ENCODE measurements at regions of chr9 and their contacts with region 1.

Region 1: DNA sequence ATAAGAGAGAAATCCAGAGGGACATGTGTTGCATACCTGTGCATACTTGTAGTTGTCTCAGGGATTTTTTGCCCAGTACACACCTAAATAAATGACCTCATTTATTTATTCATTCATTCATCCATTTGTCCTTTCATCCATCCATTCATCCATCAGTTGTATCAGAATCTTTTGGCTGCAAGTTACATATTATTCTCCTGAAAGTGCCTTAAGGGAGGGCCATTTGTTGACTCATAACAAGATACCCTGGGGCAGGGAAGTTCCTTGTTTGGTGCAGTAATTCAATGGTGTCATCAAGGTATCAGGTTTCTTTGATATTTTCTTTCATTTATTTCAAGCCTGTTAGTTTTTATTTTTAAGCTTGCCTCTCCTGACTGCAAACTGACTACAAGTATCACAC is 597.9 kb upstream of the TLE4 start:
- DNase-seq: peak; percentile 87
- H3K4me3 ChIP-seq: no peak overlapping the region
- H3K27ac ChIP-seq: peak overlapping the region; percentile 32
- H3K4me1 ChIP-seq: peaks cover 10% of the 10 kb centered on the region
- H3K27me3 ChIP-seq: no peaks in the 10 kb centered on the region
- CTCF ChIP-seq: no peak

Region 2: GRCh38 chr9:78574354-78575045 is 399.4 kb before region 1 on chr9:
- CTCF ChIA-PET with region 1: no interaction called
- dilution Hi-C with region 1: no loop called
- in situ Hi-C with region 1: no loop called
- intact Hi-C with region 1: no loop called
- DNase-seq: no peak
- H3K4me3 ChIP-seq: no peak overlapping the region
- H3K27ac ChIP-seq: no peak overlapping the region
- H3K4me1 ChIP-seq: no peaks in the 10 kb centered on the region
- H3K27me3 ChIP-seq: no peaks in the 10 kb centered on the region
- CTCF ChIP-seq: no peak

Region 3: DNA sequence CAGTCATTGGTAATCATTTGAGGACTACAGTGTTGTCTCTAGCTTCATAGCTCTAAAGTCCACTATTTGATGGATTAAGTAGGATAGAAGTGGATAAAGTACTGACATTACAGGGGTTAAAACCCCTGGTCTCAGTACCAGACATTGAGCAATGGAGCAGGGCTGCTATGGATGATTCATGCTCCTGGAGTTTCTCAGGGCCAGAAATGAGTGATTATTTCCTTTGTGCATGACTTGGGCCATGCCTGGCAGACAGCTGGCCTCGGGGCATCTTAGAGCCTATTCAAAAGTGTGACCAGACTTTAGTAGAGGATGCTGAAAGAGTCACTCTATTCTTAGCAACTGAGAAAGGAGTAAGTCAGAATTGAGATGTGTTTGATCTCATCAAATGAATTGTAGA is 247.2 kb after region 1 on chr9:
- CTCF ChIA-PET with region 1: no interaction called
- dilution Hi-C with region 1: no loop called
- in situ Hi-C with region 1: no loop called
- intact Hi-C with region 1: loop called (anchors 10 kb)
- DNase-seq: peak; percentile 87
- H3K4me3 ChIP-seq: no peak overlapping the region
- H3K27ac ChIP-seq: peak overlapping the region; percentile 9
- H3K4me1 ChIP-seq: peaks cover 32% of the 10 kb centered on the region
- H3K27me3 ChIP-seq: no peaks in the 10 kb centered on the region
- CTCF ChIP-seq: no peak

Measured in mammary epithelial cell (primary cell).